ENCODE measurements at regions of chr9 and their contacts with region 1.

Region 1: GRCh38 chr9:6667633-6668280 is 22.2 kb upstream of the GLDC start:
- DNase-seq: no peak
- H3K4me3 ChIP-seq: no peak overlapping the region
- H3K27ac ChIP-seq: no peak overlapping the region
- H3K27me3 ChIP-seq: no peaks in the 10 kb centered on the region
- CTCF ChIP-seq: peak; percentile 70

Region 2: GRCh38 chr9:6353851-6354686 is 313.7 kb before region 1 on chr9:
- CTCF ChIA-PET with region 1: interaction called, 38 read pairs
- POLR2A ChIA-PET with region 1: interaction called, 3 read pairs
- DNase-seq: peak; percentile 48
- H3K4me3 ChIP-seq: no peak overlapping the region
- H3K27ac ChIP-seq: no peak overlapping the region
- H3K27me3 ChIP-seq: no peaks in the 10 kb centered on the region
- CTCF ChIP-seq: peak; percentile 79

Region 3: GRCh38 chr9:6566409-6567139 is 101.2 kb before region 1 on chr9:
- CTCF ChIA-PET with region 1: interaction called, 13 read pairs
- POLR2A ChIA-PET with region 1: no interaction called
- DNase-seq: peak; percentile 86
- H3K4me3 ChIP-seq: peak overlapping the region; percentile 41
- H3K27ac ChIP-seq: peak overlapping the region; percentile 97
- H3K27me3 ChIP-seq: no peaks in the 10 kb centered on the region
- CTCF ChIP-seq: no peak

Region 4: GRCh38 chr9:6640268-6641072 is 27.3 kb before region 1 on chr9:
- CTCF ChIA-PET with region 1: interaction called, 18 read pairs
- POLR2A ChIA-PET with region 1: no interaction called
- DNase-seq: no peak
- H3K4me3 ChIP-seq: no peak overlapping the region
- H3K27ac ChIP-seq: no peak overlapping the region
- H3K27me3 ChIP-seq: peaks cover 21% of the 10 kb centered on the region
- CTCF ChIP-seq: no peak

Region 5: DNA sequence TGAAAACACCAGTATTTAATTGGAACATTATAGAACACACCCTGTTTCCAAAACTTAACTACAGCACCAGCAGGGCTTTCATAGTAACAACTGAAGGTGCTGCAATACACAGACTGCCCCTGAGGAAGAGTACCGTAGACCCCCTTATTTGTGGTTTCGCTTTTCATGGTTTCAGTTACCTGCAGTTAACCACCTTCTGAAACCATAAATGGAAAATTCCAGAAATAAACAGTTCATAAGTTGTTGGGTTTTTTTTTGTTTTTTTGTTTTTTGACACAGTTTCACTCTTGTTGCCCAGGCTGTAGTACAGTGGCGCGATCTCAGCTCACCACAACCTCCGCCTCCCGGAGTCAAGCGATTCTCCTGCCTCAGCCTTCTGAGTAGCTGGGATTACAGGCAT is 12.7 kb before region 1 on chr9:
- CTCF ChIA-PET with region 1: interaction called, 23 read pairs
- POLR2A ChIA-PET with region 1: interaction called, 3 read pairs
- DNase-seq: no peak
- H3K4me3 ChIP-seq: no peak overlapping the region
- H3K27ac ChIP-seq: no peak overlapping the region
- H3K27me3 ChIP-seq: peaks cover 2% of the 10 kb centered on the region
- CTCF ChIP-seq: no peak